ENCODE measurements at regions of chr5 and their contacts with region 1.

Region 1: DNA sequence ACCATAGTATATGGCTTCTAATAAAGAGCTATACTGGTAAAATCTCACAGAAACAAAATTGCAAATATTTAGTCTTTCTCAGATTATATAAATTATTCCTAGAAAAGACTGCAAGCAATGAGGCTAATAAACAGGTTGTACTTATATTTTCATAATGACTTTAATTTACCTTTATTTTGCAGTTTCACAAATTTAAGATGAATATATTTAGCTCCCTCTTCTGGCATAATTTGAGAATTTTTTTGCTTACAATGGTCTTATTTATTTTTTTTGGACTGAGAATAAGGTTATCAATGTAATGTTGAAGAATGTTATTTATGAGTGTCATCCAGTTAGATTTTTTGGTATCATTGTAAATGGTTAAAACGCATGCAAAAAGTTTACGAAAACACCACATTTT is 56.7 kb downstream of the PIK3R1 start:
- DNase-seq: no peak
- H3K4me3 Mint-ChIP-seq: no peak overlapping the region
- H3K27ac Mint-ChIP-seq: no peak overlapping the region
- H3K4me1 Mint-ChIP-seq: peaks cover 84% of the 10 kb centered on the region
- H3K27me3 Mint-ChIP-seq: no peaks in the 10 kb centered on the region

Region 2: DNA sequence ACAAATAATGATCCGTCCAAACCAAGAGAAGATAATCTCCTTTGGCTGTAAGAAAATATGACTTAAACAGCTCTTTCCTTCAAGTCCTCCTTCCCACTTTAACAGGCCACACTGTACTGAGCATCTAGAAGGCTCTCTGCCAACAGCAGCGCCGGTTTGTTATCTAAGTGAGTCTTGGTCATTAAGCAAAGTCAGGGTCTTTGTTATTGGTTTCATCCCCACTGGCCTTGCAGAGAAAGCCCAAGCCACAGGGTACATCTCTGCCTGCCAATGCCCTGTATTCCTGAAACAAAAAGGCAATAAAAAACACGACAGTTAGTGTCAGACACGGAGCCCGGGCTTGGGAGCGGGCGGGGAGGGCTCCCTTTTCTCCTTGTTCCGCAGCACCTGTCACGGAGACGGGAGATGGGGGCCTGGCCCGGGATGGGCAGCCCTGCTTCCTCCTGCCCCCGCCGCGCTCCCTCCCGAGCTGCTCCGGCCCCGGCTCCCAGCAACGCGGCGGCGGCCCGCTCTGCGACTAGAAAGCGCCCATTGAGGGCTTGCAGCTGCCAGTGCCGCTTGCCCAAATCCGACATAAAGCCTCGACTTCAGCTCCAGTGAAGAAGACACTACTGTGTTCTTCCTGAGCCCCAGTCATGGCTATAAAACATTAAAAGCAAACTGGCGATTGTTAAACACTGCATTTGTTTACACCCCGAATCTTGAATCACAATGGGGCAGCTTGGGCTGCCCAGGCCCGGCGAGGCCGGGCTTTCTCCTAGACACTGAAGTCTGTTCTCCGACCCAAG is 84.8 kb before region 1 on chr5:
- CTCF ChIA-PET with region 1: no interaction called
- POLR2A ChIA-PET with region 1: no interaction called
- DNase-seq: no peak
- H3K4me3 Mint-ChIP-seq: no peak overlapping the region
- H3K27ac Mint-ChIP-seq: no peak overlapping the region
- H3K4me1 Mint-ChIP-seq: no peaks in the 10 kb centered on the region
- H3K27me3 Mint-ChIP-seq: no peaks in the 10 kb centered on the region

Region 3: DNA sequence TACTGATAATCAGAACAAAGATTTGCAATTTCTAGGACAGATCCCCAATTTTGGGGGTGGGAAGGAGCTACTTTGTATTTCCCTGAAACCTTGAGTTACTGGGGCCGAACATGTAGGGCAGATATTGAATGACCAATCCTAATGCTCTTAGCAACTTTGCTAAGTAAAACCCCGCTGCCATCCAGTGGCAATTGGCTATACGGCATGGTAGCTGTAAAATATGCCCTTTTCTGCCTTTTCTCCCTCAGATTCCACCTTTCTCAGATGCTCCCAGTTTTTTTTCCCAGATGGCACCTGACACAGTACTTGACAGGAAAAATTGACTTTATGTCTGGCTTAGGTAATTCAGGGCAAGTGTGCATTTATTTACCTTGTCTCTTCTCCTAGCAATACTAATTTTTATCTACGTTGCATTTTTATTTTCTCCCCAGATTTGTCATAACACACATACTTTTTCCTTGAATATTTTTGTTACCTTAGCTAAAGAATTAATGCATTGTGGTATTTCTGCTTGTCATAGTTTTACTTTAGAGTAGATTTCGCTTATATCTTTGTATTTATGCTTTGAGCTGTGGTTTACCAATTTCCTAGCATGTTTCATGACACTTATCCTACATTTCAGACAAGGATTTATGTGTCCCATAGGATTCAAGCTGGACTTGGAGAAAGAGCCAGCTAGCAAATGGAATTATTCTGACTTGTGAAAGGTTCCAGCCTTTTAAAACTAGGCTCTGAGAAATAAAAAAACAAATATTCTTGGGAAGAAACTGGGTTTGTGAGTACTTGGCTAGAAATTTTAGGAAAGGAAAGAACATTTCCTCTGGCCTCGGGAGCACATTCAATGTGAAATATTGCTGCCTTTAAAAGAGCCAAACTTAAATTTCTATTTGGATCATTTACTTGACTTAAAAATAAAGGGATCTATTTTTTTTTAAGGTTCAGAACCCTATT is 19.3 kb before region 1 on chr5:
- CTCF ChIA-PET with region 1: interaction called, 26 read pairs
- POLR2A ChIA-PET with region 1: interaction called, 7 read pairs
- DNase-seq: peak; percentile 36
- H3K4me3 Mint-ChIP-seq: no peak overlapping the region
- H3K27ac Mint-ChIP-seq: no peak overlapping the region
- H3K4me1 Mint-ChIP-seq: peaks cover 77% of the 10 kb centered on the region
- H3K27me3 Mint-ChIP-seq: no peaks in the 10 kb centered on the region

Region 4: GRCh38 chr5:68260467-68260866 is 11.8 kb before region 1 on chr5:
- CTCF ChIA-PET with region 1: interaction called, 26 read pairs
- POLR2A ChIA-PET with region 1: interaction called, 7 read pairs
- DNase-seq: no peak
- H3K4me3 Mint-ChIP-seq: no peak overlapping the region
- H3K27ac Mint-ChIP-seq: no peak overlapping the region
- H3K4me1 Mint-ChIP-seq: peaks cover 59% of the 10 kb centered on the region
- H3K27me3 Mint-ChIP-seq: no peaks in the 10 kb centered on the region

Measured in activated CD4-positive, alpha-beta memory T cell treated with anti-CD3 and anti-CD28 coated beads, Interleukin-2, amount 10 ng/mL, durations not matched to agents 7 days and 5 days (primary cell).